Sciatic nerve (tissue), 2 donors: ENCODE measurements at regions of chr3 and their contacts with region 1.

Region 1: DNA sequence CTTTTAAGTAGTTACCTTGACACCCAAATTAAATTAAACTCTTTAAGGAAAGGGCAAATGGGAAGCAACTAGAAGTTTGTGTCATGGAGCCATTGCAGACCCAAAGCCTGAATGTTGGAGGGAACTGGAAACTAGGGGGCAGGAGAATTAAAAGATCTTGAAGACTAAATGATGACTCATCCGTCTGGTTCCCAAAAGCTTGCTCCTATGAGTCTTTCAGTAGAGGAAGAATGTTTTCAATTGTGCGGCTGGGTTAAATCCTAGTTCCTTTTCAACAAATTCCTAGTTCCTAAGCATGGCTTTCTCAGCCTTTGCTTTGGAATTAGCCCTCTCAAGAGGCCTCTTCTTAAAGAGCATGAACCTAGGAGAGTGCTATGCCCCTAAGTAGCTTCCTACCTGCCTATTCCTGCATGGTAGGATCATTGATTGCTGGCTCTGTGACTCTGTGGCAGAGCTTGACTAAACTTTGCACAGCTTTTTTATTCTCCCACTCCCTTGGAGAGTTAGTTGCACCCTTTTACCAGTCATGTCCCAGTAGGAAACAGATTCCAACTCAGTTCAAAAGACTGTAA is 17.7 kb downstream of the CLEC3B start:
- DNase-seq: no peak
- ATAC-seq: peak; percentile 54

Region 2: GRCh38 chr3:45210308-45211041 is 166.7 kb after region 1 on chr3:
- intact Hi-C with region 1: loop called (anchors 10 kb)
- DNase-seq: peak; percentile 91
- ATAC-seq: peak; percentile 97